Left cardiac atrium (tissue), 4 donors: ENCODE measurements at regions of chr6 and their contacts with region 1.

Region 1: GRCh38 chr6:106832772-106833505 is 141.6 kb downstream of the CD24 start:
- DNase-seq: no peak
- ATAC-seq: no peak

Region 2: DNA sequence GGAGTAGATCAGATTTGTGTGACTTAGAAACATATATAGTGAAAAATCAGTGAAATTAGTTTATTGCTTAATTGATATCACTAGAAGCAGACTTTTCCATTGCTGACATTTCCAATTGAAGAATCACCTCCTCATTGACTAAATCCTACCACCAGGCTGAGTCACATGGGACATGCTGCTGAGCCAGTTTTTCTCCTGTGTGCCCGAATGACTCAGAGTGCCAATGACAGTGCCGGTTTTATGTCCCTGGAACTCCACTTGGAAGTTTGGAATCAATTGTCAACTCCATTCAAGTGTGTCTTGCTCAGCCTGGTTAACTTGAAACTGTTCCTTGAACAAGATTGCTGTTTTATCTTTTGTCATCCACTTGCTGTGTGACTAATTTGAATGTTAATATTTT is 1063.0 kb before region 1 on chr6:
- intact Hi-C with region 1: no loop called
- DNase-seq: no peak
- ATAC-seq: no peak

Region 3: DNA sequence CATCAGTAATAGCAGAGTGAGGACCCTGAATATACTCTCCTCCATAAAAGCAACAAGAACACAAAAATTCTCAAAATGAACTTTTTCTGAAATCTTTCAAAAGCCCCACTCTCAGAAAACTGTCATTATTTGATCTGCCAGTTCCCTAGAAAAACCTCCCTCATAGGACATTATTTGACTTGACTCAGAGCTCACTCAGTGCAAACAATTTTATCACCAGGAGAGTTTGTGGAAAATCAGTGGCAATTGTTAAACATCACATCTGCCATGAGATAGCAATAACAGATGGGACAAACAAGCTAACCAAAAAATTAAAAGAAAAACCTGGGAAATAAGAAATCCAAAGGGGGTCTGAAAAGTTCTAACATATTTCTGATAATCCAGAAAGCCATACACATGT is 607.4 kb before region 1 on chr6:
- intact Hi-C with region 1: no loop called
- DNase-seq: no peak
- ATAC-seq: no peak

Region 4: GRCh38 chr6:106790149-106790770 is 42.7 kb before region 1 on chr6:
- intact Hi-C with region 1: loop called in 1 of 2 experiments (anchors 2 kb)
- DNase-seq: no peak
- ATAC-seq: no peak

Region 5: GRCh38 chr6:107361753-107362604 is 529.0 kb after region 1 on chr6:
- intact Hi-C with region 1: no loop called
- DNase-seq: no peak
- ATAC-seq: no peak

Region 6: GRCh38 chr6:107473660-107474059 is 640.7 kb after region 1 on chr6:
- intact Hi-C with region 1: no loop called
- DNase-seq: no peak
- ATAC-seq: no peak